ENCODE measurements at regions of chr3 and their contacts with region 1.

Region 1: GRCh38 chr3:53114011-53114400 is 16.2 kb downstream of the RFT1 start:
- DNase-seq: peak; percentile 77
- H3K4me3 ChIP-seq: no peak overlapping the region
- H3K27ac ChIP-seq: peak overlapping the region; percentile 85
- H3K4me1 ChIP-seq: peaks cover 52% of the 10 kb centered on the region
- H3K27me3 ChIP-seq: no peaks in the 10 kb centered on the region
- CTCF ChIP-seq: peak; percentile 91

Region 2: DNA sequence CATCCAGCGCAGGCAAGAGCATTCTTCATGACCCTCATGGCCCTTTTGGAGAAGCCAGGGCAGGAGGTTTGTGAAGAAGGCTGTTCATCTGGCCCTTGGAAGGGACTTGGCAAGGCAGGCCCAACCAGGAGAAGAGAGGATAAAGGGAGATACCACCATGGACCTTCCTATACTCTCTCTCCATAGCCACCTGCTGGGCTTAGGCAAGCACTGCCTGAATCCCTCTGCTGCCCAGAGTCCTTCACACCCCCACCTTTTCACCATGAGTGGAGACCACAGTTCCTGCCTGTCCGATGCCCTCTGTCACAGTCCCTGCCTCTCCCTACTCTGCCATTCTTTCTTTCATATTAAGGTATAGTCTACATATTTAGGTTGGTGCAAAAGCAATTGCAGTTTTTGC is 57.6 kb before region 1 on chr3:
- intact Hi-C with region 1: no loop called
- DNase-seq: no peak
- H3K4me3 ChIP-seq: no peak overlapping the region
- H3K27ac ChIP-seq: no peak overlapping the region
- H3K4me1 ChIP-seq: no peaks in the 10 kb centered on the region
- H3K27me3 ChIP-seq: no peaks in the 10 kb centered on the region
- CTCF ChIP-seq: peak; percentile 41

Region 3: DNA sequence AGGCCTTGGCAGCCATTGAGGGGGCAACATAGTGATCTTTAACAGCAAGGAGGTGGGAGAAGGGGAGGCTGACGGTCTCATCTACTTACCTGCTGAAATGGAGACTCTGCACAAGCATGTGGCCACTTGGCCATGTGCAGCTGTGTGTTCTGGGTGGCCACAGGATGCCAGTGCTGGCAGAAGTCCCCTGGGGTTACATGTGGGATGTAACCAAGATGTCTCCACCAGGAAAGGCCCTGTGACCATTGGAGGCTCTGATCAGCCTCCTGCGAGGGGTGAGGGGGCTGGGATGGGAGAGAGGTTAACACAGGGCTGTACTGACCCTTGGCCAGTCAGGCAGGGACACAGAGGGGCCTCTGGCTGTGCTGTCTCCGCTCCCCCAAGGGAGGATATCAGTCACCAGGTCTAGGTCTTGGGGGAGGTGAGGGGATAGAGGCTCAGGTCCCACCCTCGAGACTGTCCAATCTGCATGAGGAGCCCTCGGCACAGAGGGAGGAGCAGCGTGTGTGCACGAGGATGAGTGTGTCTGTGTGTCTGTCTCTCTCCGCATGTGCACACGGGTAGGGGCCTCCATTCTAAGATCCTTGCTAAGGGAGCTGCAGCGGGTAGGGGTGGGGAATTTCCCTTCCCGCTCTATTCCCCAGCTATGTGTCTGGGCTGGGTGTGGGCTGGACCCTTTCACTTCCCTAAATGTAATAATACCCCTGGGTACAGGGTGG is 66.5 kb after region 1 on chr3:
- intact Hi-C with region 1: no loop called
- DNase-seq: no peak
- H3K4me3 ChIP-seq: no peak overlapping the region
- H3K27ac ChIP-seq: no peak overlapping the region
- H3K4me1 ChIP-seq: no peaks in the 10 kb centered on the region
- H3K27me3 ChIP-seq: no peaks in the 10 kb centered on the region
- CTCF ChIP-seq: no peak

Region 4: GRCh38 chr3:53195602-53196574 is 81.9 kb after region 1 on chr3:
- intact Hi-C with region 1: loop called (anchors 2 kb)
- DNase-seq: peak; percentile 41
- H3K4me3 ChIP-seq: no peak overlapping the region
- H3K27ac ChIP-seq: no peak overlapping the region
- H3K4me1 ChIP-seq: peaks cover 32% of the 10 kb centered on the region
- H3K27me3 ChIP-seq: no peaks in the 10 kb centered on the region
- CTCF ChIP-seq: peak; percentile 99

Region 5: DNA sequence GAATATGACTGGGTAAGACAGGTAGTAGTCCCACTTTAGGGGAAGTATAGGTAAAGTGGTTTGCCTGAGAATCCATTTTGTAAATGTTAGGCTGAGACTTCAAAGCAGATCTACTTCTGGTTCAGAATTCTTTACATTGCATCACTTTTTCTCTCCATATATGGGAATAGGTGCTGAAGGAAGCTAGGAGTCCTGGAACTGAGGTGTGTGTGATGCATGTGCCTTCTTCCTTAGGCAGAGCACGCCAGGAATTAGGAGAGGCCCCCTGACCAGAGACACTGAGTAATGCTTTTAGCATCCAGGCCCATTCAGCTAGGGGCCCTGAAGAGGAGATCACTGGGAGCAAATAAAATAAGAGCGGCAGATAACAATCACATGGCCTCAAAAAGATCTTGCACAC is 302.5 kb after region 1 on chr3:
- intact Hi-C with region 1: no loop called
- DNase-seq: no peak
- H3K4me3 ChIP-seq: no peak overlapping the region
- H3K27ac ChIP-seq: no peak overlapping the region
- H3K4me1 ChIP-seq: no peaks in the 10 kb centered on the region
- H3K27me3 ChIP-seq: peaks cover 12% of the 10 kb centered on the region
- CTCF ChIP-seq: no peak

Region 6: GRCh38 chr3:53721187-53722119 is 607.4 kb after region 1 on chr3:
- intact Hi-C with region 1: loop called (anchors 5 kb)
- DNase-seq: no peak
- H3K4me3 ChIP-seq: no peak overlapping the region
- H3K27ac ChIP-seq: no peak overlapping the region
- H3K4me1 ChIP-seq: no peaks in the 10 kb centered on the region
- H3K27me3 ChIP-seq: peaks cover 18% of the 10 kb centered on the region
- CTCF ChIP-seq: no peak

Measured in left ventricle myocardium inferior (tissue), 1 donor.